Activated CD4-positive, alpha-beta memory T cell treated with anti-CD3 and anti-CD28 coated beads for 36 hours (primary cell): ENCODE measurements at regions of chr3 and their contacts with region 1.

Region 1: DNA sequence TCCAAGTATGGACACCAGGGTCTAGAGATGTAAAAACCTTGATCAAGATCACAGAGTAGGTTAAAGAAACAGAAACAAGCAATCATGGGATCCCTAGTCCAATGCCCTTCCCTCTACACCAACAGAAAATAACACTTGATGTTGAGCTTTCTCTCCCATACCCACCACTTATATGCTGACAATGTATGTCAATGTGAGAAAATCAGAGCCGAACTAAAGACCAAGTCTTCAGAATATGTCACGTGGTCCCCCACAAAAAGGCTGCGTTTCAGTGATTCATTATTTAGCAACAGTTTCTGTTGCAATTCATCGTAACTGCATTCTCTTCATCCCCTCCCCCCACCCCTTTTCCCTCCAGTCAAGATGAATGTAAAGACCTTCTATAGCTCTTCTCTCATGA is 278.9 kb upstream of the STT3B start:
- DNase-seq: peak; percentile 62
- H3K4me3 Mint-ChIP-seq: peak overlapping the region; percentile 30
- H3K27ac Mint-ChIP-seq: peak overlapping the region; percentile 96
- H3K4me1 Mint-ChIP-seq: peaks cover 62% of the 10 kb centered on the region
- H3K27me3 Mint-ChIP-seq: no peaks in the 10 kb centered on the region

Region 2: GRCh38 chr3:30644593-30645012 is 609.2 kb before region 1 on chr3:
- CTCF ChIA-PET with region 1: no interaction called
- POLR2A ChIA-PET with region 1: no interaction called
- intact Hi-C with region 1: loop called (anchors 2 kb)
- DNase-seq: peak; percentile 75
- H3K4me3 Mint-ChIP-seq: peak overlapping the region; percentile 50
- H3K27ac Mint-ChIP-seq: peak overlapping the region; percentile 94
- H3K4me1 Mint-ChIP-seq: peaks cover 92% of the 10 kb centered on the region
- H3K27me3 Mint-ChIP-seq: no peaks in the 10 kb centered on the region

Region 3: DNA sequence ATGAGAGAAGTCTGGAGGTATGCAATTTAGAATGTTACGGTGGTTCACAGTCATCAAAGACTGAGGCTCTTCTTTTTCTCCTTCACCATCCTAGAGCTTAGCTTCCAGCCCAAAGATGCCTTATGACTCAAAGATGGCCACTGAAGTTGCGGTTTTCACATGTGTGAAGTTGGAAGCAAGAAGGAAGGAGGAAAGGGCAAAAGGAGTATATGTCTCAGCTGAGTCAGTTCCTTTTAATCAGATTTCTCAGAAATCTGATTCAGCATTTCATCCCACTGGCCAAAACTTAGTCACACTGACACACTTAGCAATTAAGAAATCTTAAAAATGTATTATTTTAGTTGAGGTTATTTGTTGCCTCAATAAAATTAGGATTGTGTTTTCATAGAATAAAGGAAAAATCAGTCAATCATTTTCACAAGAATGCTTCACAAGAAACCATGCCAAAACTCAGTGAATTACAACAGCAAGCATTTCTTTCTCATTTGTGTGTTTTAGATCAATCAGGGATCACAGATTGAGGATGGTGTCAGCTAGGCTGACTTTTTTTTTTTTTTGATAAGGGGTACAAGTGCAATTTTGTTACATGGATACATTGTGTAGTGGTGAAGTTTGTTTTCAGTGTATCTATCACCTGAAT is 148.2 kb before region 1 on chr3:
- CTCF ChIA-PET with region 1: no interaction called
- POLR2A ChIA-PET with region 1: no interaction called
- intact Hi-C with region 1: loop called (anchors 1 kb)
- DNase-seq: peak; percentile 51
- H3K4me3 Mint-ChIP-seq: no peak overlapping the region
- H3K27ac Mint-ChIP-seq: no peak overlapping the region
- H3K4me1 Mint-ChIP-seq: peaks cover 37% of the 10 kb centered on the region
- H3K27me3 Mint-ChIP-seq: no peaks in the 10 kb centered on the region

Region 4: DNA sequence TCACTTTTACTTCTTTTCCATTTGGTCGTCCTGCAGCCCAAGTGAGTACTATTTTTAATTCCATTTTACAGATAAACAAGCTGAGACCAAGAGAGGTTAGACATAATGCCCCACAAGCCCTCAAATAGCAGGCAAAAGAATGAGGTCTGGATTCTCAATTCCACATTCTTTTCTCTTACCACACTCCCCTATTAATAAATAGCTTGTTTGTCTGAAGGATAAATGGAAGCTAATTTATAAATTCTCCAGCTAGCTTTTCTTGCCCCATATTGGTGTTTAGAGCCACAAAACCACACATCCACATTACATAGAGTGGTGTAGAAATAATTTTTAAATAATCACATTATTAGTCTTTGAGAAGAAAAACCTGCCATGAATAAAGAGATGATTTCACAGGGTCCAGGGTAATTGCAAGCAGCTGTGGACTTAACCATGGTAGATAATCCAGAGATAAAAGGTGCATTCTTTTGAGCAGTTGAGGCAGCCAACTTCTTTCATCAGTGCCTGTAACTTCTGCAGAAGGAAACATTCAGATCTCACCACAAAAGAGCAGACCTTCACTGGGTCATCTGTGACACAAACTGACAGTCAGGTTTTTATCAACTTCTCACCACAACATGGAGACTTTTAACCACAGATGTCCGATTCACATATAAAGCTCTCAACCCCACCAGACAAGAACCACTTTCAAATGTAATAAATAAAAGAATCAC is 34.5 kb before region 1 on chr3:
- CTCF ChIA-PET with region 1: interaction called, 3 read pairs
- POLR2A ChIA-PET with region 1: interaction called, 4 read pairs
- intact Hi-C with region 1: loop called (anchors 1 kb)
- DNase-seq: no peak
- H3K4me3 Mint-ChIP-seq: no peak overlapping the region
- H3K27ac Mint-ChIP-seq: peak overlapping the region; percentile 2
- H3K4me1 Mint-ChIP-seq: peaks cover 92% of the 10 kb centered on the region
- H3K27me3 Mint-ChIP-seq: no peaks in the 10 kb centered on the region

Region 5: GRCh38 chr3:31242026-31242960 is 11.5 kb before region 1 on chr3:
- CTCF ChIA-PET with region 1: interaction called, 4 read pairs
- POLR2A ChIA-PET with region 1: interaction called, 3 read pairs
- intact Hi-C with region 1: loop called (anchors 1 kb)
- DNase-seq: no peak
- H3K4me3 Mint-ChIP-seq: no peak overlapping the region
- H3K27ac Mint-ChIP-seq: no peak overlapping the region
- H3K4me1 Mint-ChIP-seq: peaks cover 24% of the 10 kb centered on the region
- H3K27me3 Mint-ChIP-seq: no peaks in the 10 kb centered on the region

Region 6: GRCh38 chr3:31377045-31377642 is 123.4 kb after region 1 on chr3:
- CTCF ChIA-PET with region 1: no interaction called
- POLR2A ChIA-PET with region 1: no interaction called
- intact Hi-C with region 1: loop called (anchors 2 kb)
- DNase-seq: peak; percentile 50
- H3K4me3 Mint-ChIP-seq: no peak overlapping the region
- H3K27ac Mint-ChIP-seq: no peak overlapping the region
- H3K4me1 Mint-ChIP-seq: peaks cover 13% of the 10 kb centered on the region
- H3K27me3 Mint-ChIP-seq: no peaks in the 10 kb centered on the region